CD4-positive, alpha-beta T cell (primary cell): ENCODE measurements at regions of chrX and their contacts with region 1.

Region 1: GRCh38 chrX:38803586-38804431 is 2.5 kb downstream of the MID1IP1 start:
- DNase-seq: peak in 13 of 14 experiments; percentile 33 to 77 (median 53)
- ATAC-seq: peak; percentile 21
- H3K4me3 ChIP-seq: peak overlapping the region; percentile 89
- H3K4me3 Mint-ChIP-seq: peak overlapping the region; percentile 95
- H3K27ac ChIP-seq: peak overlapping the region; percentile 79 to 85
- H3K27ac Mint-ChIP-seq: peak overlapping the region; percentile 98
- H3K4me1 ChIP-seq: peaks cover 22% of the 10 kb centered on the region
- H3K4me1 Mint-ChIP-seq: peaks cover 46% of the 10 kb centered on the region
- H3K27me3 ChIP-seq: no peaks in the 10 kb centered on the region
- H3K27me3 Mint-ChIP-seq: no peaks in the 10 kb centered on the region
- CTCF ChIP-seq: no peak

Region 2: DNA sequence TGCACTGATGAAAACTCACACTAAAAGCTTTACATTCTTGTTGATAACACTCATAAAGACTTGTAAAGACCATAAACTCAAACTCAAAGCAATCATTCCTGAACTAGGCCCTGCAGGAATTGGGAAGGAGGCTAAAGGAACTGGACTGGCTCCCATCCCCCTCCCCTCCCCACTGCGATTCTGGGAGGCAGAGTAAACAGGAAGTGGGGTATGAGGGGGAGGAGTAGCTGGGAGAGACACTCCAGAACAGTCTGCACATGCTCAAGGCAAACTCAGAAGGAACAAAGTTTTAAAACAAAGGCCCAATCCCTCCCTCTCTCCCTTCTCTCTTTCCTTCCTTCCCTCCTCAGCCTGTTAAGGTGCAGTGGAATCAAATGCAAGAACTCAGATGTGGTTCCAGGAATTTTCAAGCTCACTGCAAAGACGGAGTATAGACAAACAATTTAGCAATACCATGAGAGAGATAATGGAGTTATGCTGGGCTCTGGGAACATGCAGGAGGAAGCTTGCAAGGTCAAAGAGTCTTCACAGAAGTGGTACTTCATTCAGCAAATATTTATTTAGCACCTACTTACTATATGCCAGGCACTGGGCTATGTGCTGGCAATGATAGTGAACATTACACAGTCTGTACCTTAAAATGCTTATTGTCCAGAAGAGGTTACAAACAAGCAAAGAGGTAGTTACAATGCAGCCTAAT is 13.3 kb after region 1 on chrX:
- CTCF ChIA-PET with region 1: interaction called, 3 read pairs
- POLR2A ChIA-PET with region 1: interaction called, 45 read pairs
- intact Hi-C with region 1: no loop called
- DNase-seq: peak in 6 of 14 experiments; percentile 2 to 52 (median 34)
- ATAC-seq: peak; percentile 46
- H3K4me3 ChIP-seq: no peak overlapping the region
- H3K4me3 Mint-ChIP-seq: peak overlapping the region; percentile 77
- H3K27ac ChIP-seq: peak overlapping the region; percentile 57 to 64
- H3K27ac Mint-ChIP-seq: no peak overlapping the region
- H3K4me1 ChIP-seq: peaks cover 46% of the 10 kb centered on the region
- H3K4me1 Mint-ChIP-seq: peaks cover 14% of the 10 kb centered on the region
- H3K27me3 ChIP-seq: no peaks in the 10 kb centered on the region
- H3K27me3 Mint-ChIP-seq: no peaks in the 10 kb centered on the region
- CTCF ChIP-seq: no peak

Region 3: GRCh38 chrX:38879631-38880220 is 75.9 kb after region 1 on chrX:
- CTCF ChIA-PET with region 1: interaction called, 3 read pairs
- POLR2A ChIA-PET with region 1: interaction called, 32 read pairs
- intact Hi-C with region 1: loop called in 1 of 2 experiments (anchors 10 kb)
- DNase-seq: peak in 6 of 14 experiments; percentile 4 to 32 (median 16)
- ATAC-seq: peak; percentile 86
- H3K4me3 ChIP-seq: no peak overlapping the region
- H3K4me3 Mint-ChIP-seq: peak overlapping the region; percentile 64
- H3K27ac ChIP-seq: no peak overlapping the region
- H3K27ac Mint-ChIP-seq: peak overlapping the region; percentile 55
- H3K4me1 ChIP-seq: peaks cover 12% of the 10 kb centered on the region
- H3K4me1 Mint-ChIP-seq: peaks cover 26% of the 10 kb centered on the region
- H3K27me3 ChIP-seq: no peaks in the 10 kb centered on the region
- H3K27me3 Mint-ChIP-seq: no peaks in the 10 kb centered on the region
- CTCF ChIP-seq: no peak

Region 4: GRCh38 chrX:38891641-38892413 is 88.0 kb after region 1 on chrX:
- CTCF ChIA-PET with region 1: no interaction called
- POLR2A ChIA-PET with region 1: interaction called, 3 read pairs
- intact Hi-C with region 1: loop called in 1 of 2 experiments (anchors 10 kb)
- DNase-seq: no peak
- ATAC-seq: no peak
- H3K4me3 ChIP-seq: no peak overlapping the region
- H3K4me3 Mint-ChIP-seq: no peak overlapping the region
- H3K27ac ChIP-seq: no peak overlapping the region
- H3K27ac Mint-ChIP-seq: no peak overlapping the region
- H3K4me1 ChIP-seq: peaks cover 4% of the 10 kb centered on the region
- H3K4me1 Mint-ChIP-seq: peaks cover 10% of the 10 kb centered on the region
- H3K27me3 ChIP-seq: no peaks in the 10 kb centered on the region
- H3K27me3 Mint-ChIP-seq: no peaks in the 10 kb centered on the region
- CTCF ChIP-seq: no peak

Region 5: DNA sequence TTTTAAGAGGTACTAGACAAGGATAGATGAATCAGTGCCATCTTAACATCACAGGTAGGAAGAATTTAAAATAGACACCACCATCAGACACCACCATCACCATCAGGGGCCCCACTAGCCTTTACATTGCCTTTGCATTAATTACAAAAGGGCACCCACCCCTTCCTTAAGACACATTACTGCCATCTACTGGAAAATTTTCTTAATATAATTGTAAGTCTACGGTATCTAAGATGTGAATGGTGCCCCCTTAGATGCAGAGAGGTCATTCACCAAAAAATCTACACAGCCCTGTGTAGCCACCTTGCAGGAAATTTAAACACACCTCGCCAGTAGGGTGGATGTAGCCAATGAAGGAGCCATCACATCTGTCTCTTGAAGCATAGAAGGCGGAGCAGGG is 181.6 kb after region 1 on chrX:
- CTCF ChIA-PET with region 1: interaction called, 4 read pairs
- POLR2A ChIA-PET with region 1: interaction called, 4 read pairs
- intact Hi-C with region 1: loop called (anchors 1 to 2 kb)
- DNase-seq: peak in 4 of 14 experiments; percentile 3 to 47 (median 41)
- ATAC-seq: no peak
- H3K4me3 ChIP-seq: no peak overlapping the region
- H3K4me3 Mint-ChIP-seq: no peak overlapping the region
- H3K27ac ChIP-seq: no peak overlapping the region
- H3K27ac Mint-ChIP-seq: no peak overlapping the region
- H3K4me1 ChIP-seq: no peaks in the 10 kb centered on the region
- H3K4me1 Mint-ChIP-seq: peaks cover 6% of the 10 kb centered on the region
- H3K27me3 ChIP-seq: no peaks in the 10 kb centered on the region
- H3K27me3 Mint-ChIP-seq: no peaks in the 10 kb centered on the region
- CTCF ChIP-seq: peak; percentile 42

Region 6: GRCh38 chrX:39301036-39301435 is 497.2 kb after region 1 on chrX:
- CTCF ChIA-PET with region 1: no interaction called
- POLR2A ChIA-PET with region 1: no interaction called
- intact Hi-C with region 1: no loop called
- DNase-seq: no peak
- ATAC-seq: no peak
- H3K4me3 ChIP-seq: no peak overlapping the region
- H3K4me3 Mint-ChIP-seq: no peak overlapping the region
- H3K27ac ChIP-seq: no peak overlapping the region
- H3K27ac Mint-ChIP-seq: no peak overlapping the region
- H3K4me1 ChIP-seq: peaks cover 3% of the 10 kb centered on the region
- H3K4me1 Mint-ChIP-seq: peaks cover 16% of the 10 kb centered on the region
- H3K27me3 ChIP-seq: no peaks in the 10 kb centered on the region
- H3K27me3 Mint-ChIP-seq: no peaks in the 10 kb centered on the region
- CTCF ChIP-seq: no peak